Motor neuron (in vitro differentiated cells): ENCODE measurements at regions of chr11 and their contacts with region 1.

Region 1: DNA sequence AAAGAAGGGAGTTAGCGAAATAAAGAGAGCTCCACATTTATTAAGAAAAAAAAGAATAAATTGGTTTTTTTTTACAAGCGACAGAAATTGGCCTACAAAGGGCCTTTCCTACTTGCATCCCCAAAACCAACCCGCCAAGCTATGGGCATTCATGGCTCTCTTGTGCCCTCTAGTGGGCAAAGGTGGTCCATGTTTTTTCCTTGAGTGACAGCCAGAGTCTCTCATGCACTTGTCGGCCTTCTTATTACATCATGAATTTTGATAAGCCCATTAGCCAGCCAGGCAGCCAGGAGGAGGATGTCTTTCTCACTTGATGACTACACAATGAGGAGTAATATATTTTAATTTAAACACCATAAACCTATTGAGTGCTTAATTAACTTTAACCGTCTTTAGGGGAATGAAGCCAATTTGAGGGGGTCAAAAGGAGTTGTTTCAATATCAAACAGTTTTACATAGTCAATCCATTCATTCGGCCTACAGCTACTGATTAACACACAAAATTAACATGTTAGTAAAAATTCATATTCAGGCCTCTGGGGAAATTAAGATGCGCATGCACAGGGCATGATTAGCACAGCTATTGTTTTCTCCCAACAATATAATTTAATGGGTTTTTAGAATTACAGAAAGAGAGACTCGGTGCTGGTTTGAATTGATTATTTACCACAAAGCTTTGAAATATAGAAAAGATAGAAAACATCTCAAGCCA is 85.5 kb downstream of the RCN1 start:
- ATAC-seq: peak; percentile 64 to 82 (median 71)
- H3K4me3 ChIP-seq: no peak overlapping the region
- H3K27ac ChIP-seq: no peak overlapping the region
- H3K4me1 ChIP-seq: peaks cover 0 to 12% of the 10 kb centered on the region in 2 donors

Region 2: DNA sequence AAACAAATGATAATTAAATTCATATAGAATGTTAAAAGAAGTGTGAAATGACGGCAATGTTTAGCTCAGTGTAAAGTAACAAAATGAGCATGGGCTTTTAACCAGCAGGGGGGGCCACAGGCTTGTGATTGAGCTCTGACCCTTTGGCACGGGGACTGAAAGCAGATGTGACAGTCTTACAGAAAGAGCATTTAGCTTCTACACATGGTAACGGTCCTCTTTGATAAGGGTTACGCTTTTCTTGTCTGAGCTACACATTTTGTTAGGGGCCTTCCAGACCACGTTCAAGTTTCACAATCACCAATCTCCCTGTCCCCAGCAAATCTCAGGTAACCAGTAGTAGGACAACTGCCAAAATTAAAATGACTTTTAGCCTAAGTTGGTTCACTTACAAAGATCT is 1069.3 kb before region 1 on chr11:
- in situ Hi-C with region 1: loop called in 2 of 9 experiments (anchors 25 kb)
- ATAC-seq: peak; percentile 86 to 95 (median 90)
- H3K4me3 ChIP-seq: no peak overlapping the region
- H3K27ac ChIP-seq: no peak overlapping the region
- H3K4me1 ChIP-seq: peaks cover 10 to 26% of the 10 kb centered on the region in 2 donors

Region 3: DNA sequence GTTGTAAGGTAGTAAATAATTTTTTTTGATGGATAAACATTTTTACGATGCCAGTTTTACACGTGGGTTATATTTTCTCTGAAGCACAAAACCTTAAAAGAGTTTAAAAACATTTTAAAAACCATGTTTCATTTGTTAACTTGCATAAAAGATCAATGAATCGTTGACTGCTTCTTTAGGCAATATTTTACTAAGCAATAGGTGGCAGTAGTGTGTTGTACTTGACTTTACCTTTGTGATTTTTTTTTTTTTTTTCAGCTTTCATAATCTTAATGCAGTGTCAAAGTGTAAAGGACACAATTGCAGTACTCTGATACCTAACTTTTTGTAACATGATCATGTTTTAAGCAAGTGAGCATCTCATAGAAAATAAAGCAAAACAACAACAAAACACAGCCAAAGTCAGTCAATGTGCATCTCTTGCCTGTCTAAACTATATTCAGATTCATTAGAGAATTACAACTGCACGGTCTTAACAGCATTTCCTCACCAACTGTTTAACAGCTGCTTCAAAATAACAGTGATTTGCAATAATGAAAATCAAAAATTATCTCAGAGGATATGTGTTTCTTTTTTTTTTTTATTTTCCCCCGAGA is 779.0 kb before region 1 on chr11:
- in situ Hi-C with region 1: loop called in 1 of 9 experiments (anchors 10 kb)
- ATAC-seq: peak in 1 of 8 experiments; percentile 24
- H3K4me3 ChIP-seq: no peak overlapping the region
- H3K27ac ChIP-seq: no peak overlapping the region
- H3K4me1 ChIP-seq: peaks cover 0 to 3% of the 10 kb centered on the region in 2 donors

Region 4: DNA sequence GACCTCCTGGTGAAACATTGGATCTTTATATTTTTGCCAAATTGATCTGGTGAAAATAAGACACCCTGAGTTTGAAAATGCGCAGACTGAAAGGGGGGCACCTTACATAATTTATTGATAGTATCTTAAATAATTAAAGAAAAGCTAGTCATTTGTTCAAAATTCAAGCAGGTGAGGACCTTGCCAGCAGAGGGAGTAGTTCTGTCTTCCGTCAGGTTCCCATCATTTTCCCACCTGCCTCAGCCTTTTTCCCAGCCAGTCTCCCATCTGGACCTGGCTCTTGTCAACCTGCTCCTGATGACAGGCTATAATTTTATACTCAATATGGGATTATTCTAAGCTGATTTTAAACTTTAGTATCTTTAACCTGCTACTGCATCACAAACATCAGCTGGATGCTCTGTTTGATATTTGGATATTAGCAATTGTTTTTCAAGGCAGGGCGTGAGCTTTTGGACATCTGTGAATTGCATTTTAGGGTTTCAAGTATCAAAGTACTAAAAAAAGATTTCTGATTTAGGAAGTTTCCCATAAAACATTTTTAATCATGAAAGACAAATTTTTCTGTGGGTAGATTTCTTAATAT is 534.8 kb before region 1 on chr11:
- in situ Hi-C with region 1: loop called in 1 of 9 experiments (anchors 25 kb)
- ATAC-seq: no peak
- H3K4me3 ChIP-seq: no peak overlapping the region
- H3K27ac ChIP-seq: no peak overlapping the region
- H3K4me1 ChIP-seq: peaks cover 0 to 4% of the 10 kb centered on the region in 2 donors

Region 5: GRCh38 chr11:32034149-32034548 is 142.2 kb before region 1 on chr11:
- in situ Hi-C with region 1: loop called in 1 of 9 experiments (anchors 10 kb)
- ATAC-seq: peak in 2 of 8 experiments; percentile 62 to 64
- H3K4me3 ChIP-seq: no peak overlapping the region
- H3K27ac ChIP-seq: no peak overlapping the region
- H3K4me1 ChIP-seq: peaks cover 3 to 26% of the 10 kb centered on the region in 2 donors

Region 6: DNA sequence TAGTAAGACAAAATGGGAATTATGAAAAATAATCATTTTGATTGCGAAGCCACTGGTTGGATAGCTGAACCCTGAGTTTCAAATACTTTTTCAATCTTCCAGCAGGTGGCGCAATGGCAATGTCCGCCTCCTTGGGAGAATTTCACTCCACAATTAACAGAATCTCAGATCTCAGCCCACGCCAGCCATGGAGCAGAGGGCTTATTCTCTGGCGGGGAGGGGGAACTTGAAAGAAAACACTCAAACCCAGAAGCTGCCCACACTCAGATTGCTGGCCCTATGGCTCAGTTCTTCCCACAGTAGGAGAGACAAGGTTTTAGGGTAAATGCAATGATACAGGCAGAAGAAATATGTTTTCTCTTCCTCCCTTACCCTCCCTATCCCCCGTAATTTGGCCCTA is 124.2 kb before region 1 on chr11:
- in situ Hi-C with region 1: loop called in 2 of 9 experiments (anchors 10 to 25 kb)
- ATAC-seq: peak; percentile 24 to 76 (median 44)
- H3K4me3 ChIP-seq: no peak overlapping the region
- H3K27ac ChIP-seq: no peak overlapping the region
- H3K4me1 ChIP-seq: peaks cover 7 to 16% of the 10 kb centered on the region in 2 donors